ENCODE measurements at regions of chr17 and their contacts with region 1.

Region 1: DNA sequence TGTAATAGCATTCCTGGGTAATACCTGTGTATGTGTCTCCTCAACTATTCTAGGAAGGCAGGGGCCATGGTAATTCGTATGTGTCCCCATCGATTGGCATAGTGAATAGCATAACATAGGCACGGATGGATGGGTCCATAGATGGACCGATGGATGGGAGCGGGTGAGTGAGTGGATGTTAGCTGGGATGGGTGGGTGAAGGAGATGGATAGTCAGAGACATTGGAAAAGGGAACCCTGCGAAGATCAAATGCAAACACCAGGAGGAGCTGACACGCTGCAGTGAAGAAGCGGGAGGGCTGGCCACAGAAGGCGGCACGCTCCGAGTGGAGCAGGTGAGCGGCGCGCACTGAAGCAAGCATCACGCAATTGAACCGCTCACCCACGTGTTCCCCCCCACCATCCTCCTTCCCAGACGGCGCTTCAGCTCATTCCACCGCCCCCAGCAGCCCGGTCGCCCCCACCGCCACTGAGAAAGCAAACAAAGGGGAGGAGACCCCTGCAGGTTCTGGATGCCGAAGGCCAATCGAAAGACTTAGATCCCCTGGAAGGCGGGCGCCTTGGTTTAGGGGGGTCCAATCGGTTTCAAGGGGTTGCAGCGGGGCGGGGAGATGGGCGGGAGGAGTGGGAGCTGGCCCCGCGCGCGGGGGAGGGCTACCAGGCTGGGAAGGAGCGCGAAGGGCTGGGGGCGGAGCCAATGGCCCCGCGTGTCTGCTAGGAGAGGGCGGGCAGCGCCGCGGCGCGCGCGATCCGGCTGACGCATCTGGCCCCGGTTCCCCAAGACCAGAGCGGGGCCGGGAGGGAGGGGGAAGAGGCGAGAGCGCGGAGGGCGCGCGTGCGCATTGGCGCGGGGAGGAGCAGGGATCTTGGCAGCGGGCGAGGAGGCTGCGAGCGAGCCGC is at the start of gene ARRB2:
- DNase-seq: peak; percentile 93
- ATAC-seq: peak; percentile 87
- H3K4me3 Mint-ChIP-seq: peak within 1 kb of the TSS; percentile 86
- H3K27ac Mint-ChIP-seq: peak within 1 kb of the TSS; percentile 83
- H3K4me1 Mint-ChIP-seq: peaks cover 43% of the 10 kb centered on the region
- H3K27me3 Mint-ChIP-seq: no peaks in the 10 kb centered on the region
- CTCF ChIP-seq: peak; percentile 27
- total RNA-seq, gene ARRB2: 45.1 and 52.0 TPM in 2 replicates

Region 2: DNA sequence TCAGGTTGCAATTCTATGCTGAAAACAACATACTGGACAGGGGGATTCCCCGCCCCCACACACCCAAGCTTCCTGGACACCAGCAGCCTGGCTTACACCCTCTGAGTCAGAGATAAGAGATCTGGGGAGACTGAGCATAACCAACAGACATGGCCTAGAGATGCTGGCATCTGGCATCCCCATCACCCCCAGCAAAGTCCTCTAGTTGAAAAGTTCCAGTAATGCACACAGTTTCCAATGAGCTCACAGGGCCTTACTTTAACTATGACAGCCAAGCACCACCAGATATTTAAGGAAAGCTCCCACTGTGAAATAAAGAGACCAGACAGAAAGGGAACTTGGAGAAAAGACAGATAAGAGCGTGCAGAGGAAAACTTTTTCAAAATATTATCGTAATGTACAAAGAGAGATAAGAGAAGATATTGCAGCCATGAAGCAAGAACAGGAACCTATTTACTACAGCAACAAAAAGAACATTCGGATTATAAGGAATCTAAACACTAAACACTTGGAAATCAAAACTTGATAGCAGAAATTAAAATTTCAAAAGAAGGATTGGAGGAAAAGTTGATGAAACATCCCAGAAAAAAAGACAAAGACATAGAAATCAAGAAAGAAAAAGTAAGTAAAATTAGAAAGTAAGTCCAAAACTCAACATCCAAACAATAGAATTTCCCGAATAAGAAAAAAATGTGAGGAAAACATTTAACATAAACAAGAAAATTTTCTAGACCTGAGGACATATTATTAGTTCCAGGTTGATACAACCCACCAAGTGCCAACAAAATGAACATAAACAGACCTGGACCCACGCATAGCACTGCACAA is 51.4 kb before region 1 on chr17:
- CTCF ChIA-PET with region 1: no interaction called
- POLR2A ChIA-PET with region 1: no interaction called
- intact Hi-C with region 1: no loop called
- DNase-seq: no peak
- ATAC-seq: no peak
- H3K4me3 Mint-ChIP-seq: no peak overlapping the region
- H3K27ac Mint-ChIP-seq: no peak overlapping the region
- H3K4me1 Mint-ChIP-seq: peaks cover 2% of the 10 kb centered on the region
- H3K27me3 Mint-ChIP-seq: peaks cover 15% of the 10 kb centered on the region
- CTCF ChIP-seq: no peak

Region 3: GRCh38 chr17:4733073-4733531 is 23.1 kb after region 1 on chr17:
- CTCF ChIA-PET with region 1: interaction called, 3 read pairs
- POLR2A ChIA-PET with region 1: interaction called, 6 read pairs
- intact Hi-C with region 1: loop called (anchors 1 kb)
- DNase-seq: peak; percentile 49
- ATAC-seq: peak; percentile 65
- H3K4me3 Mint-ChIP-seq: peak overlapping the region; percentile 70
- H3K27ac Mint-ChIP-seq: peak overlapping the region; percentile 90
- H3K4me1 Mint-ChIP-seq: peaks cover 54% of the 10 kb centered on the region
- H3K27me3 Mint-ChIP-seq: no peaks in the 10 kb centered on the region
- CTCF ChIP-seq: no peak

Region 4: DNA sequence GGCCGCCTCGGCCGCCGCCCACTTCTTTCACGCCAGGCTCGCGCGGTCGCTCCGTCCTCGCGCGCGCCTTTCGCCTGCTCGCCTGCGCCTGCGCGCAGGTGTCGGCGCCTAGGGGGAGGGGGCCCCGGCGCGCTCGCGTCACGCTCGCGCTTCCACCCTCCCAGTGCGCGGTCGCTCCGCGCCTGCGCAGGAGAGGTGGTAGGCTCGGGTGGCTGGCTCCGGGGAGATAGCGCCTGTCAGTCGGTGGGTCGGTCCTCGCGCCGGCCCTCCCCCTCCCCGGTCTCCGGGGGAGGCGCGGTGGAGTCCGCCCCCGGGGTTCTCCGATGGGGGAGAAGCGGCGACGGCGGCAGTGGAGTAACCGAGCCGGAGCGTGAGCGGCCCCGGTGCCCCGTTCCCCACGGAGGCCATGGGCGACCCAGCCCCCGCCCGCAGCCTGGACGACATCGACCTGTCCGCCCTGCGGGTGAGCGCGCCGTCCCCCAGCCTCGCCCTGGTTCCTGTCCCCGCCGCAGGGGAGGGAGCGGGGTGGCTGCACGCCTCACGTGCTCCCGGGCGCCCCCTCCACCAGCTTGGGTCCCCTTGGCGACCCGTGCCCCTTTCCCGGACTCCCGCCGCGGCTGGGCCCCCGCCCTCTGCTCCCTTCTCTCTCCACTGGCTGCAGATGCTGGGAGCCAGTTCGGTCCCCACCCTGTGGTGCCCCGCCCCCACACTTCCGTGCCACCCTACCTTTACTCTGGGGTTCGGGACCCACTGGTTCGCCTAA is 123.3 kb after region 1 on chr17 and contains the start of gene MINK1:
- CTCF ChIA-PET with region 1: no interaction called
- POLR2A ChIA-PET with region 1: no interaction called
- intact Hi-C with region 1: loop called (anchors 1 kb)
- DNase-seq: peak; percentile 88
- ATAC-seq: peak; percentile 95
- H3K4me3 Mint-ChIP-seq: peak within 1 kb of the TSS; percentile 94
- H3K27ac Mint-ChIP-seq: peak within 1 kb of the TSS; percentile 96
- H3K4me1 Mint-ChIP-seq: peaks cover 33% of the 10 kb centered on the region
- H3K27me3 Mint-ChIP-seq: no peaks in the 10 kb centered on the region
- CTCF ChIP-seq: no peak
- total RNA-seq, gene MINK1: 61.3 and 65.3 TPM in 2 replicates

Region 5: DNA sequence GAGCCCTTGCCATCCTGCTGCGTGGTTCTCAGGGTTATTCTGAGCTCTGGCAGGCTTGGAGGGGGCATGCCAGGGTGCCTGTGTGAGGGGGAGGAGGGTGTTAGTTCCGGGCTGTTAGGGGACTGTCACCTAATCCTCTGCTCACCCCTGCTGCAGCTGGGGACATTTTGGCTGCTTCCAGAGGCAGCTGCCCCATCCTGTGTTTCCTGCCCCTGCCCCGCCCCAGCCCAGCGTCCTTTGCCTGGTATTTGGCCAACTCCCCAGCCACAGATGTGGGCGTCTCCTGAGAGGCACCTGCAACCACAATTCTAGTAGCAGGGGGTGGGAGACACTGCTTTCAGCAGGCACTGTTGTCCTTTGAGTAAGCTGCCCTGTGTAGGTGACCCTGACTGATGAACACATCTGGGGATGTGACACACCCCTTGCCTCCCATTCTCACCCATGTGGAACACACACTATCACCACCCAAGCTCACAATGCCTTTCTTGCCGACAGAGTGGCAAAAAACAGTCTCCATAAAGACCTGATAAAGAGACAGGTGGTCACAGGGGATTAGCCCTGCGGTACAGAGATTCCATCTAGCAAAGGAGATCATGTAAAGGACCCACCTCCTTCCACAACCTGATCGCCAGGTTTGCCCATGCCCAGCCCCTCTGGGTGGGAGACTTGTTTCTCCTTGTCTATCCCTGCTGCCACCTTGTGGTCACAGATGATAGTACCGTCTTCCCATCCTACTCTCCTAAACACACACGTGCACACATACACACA is 193.2 kb after region 1 on chr17 and contains the start of gene CHRNE:
- CTCF ChIA-PET with region 1: interaction called, 4 read pairs
- POLR2A ChIA-PET with region 1: interaction called, 10 read pairs
- intact Hi-C with region 1: loop called (anchors 1 kb)
- DNase-seq: peak; percentile 49
- ATAC-seq: peak; percentile 41
- H3K4me3 Mint-ChIP-seq: peak within 1 kb of the TSS; percentile 49
- H3K27ac Mint-ChIP-seq: peak within 1 kb of the TSS; percentile 73
- H3K4me1 Mint-ChIP-seq: peaks cover 44% of the 10 kb centered on the region
- H3K27me3 Mint-ChIP-seq: peaks cover 2% of the 10 kb centered on the region
- CTCF ChIP-seq: no peak
- total RNA-seq, gene CHRNE: 0.38 and 0.66 TPM in 2 replicates

Region 6: DNA sequence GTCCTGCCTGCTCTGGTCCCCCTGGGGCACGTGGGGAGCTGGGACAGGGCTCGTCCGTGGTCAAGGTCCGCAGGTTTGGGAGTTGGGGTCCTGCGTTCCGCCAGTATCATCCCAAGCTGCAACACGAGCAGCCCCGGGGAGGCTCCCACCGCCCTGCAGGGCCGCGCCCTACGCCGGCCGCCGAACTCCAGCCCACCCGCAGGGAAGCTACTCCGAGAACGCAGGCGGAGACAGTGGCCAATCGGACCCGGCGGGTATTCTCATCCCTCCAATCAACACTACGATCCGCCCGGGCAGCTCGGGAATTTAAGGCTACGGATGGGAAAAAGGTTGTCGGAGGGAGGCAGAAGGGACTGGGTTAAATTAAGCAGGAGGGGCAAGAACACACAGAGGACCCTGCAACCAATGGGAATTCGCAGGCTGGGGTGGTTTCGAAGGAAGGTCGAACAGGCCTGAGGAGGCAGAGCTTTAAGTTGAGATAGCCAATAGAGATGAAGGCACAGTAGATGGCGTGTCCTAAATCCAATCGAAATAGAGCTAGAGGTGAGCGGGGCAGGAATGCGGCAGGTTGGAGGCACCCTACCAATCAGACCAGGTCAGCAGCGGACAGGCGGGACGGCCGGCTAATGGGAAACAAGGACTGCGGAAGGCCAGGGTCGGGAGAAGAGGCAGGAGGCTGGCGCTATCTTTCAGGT is 256.9 kb after region 1 on chr17:
- CTCF ChIA-PET with region 1: no interaction called
- POLR2A ChIA-PET with region 1: interaction called, 3 read pairs
- intact Hi-C with region 1: loop called (anchors 5 kb)
- DNase-seq: no peak
- ATAC-seq: peak; percentile 87
- H3K4me3 Mint-ChIP-seq: no peak overlapping the region
- H3K27ac Mint-ChIP-seq: no peak overlapping the region
- H3K4me1 Mint-ChIP-seq: peaks cover 18% of the 10 kb centered on the region
- H3K27me3 Mint-ChIP-seq: no peaks in the 10 kb centered on the region
- CTCF ChIP-seq: no peak

Measured in activated B cell treated with CpG ODN at 0.5 μM for 24 hours (primary cell).